Activated naive CD4-positive, alpha-beta T cell treated with anti-CD3 and anti-CD28 coated beads for 36 hours (primary cell): ENCODE measurements at regions of chr1 and their contacts with region 1.

Region 1: DNA sequence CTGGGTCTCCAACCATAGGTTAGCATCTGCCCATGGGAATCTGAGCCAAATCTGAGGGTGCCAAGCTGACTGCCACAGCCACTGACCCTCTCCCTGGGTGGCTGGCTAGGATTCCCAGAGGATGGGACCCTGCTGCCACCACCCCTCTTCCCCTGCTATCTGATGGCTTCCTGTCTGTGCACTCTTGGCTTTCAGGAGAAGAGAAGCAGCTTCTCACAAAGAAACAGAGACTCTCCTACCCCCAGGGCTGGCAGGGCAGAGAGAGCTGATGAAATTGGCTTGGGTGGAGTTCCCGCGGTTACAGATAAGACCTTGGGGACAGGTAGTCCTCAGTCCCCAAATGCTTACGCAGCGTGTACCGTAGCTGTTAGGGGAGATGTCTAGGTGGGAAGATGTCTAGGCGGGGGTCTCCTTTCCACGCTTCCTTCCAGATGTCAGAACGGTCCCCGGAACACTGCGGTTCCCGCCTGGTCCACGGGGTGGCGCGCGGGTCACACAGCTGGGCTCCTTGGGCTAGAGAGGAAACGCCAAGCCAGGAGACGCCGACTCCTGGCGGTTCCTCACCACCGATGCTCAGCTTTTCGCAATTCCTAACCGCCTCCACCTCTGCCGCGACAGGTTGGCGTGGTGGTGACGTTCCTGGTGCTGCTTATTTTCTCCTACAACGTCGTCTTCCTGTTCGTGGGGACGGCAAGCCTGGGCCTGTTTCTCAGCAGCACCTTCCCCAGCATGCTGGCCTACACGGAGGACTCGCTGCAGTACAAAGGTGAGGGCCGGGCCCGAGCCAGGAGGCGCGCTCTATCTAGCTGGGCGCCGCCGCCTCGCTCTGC is 40.1 kb downstream of the ELK4 start:
- DNase-seq: peak; percentile 96
- H3K4me3 Mint-ChIP-seq: peak overlapping the region; percentile 88
- H3K27ac Mint-ChIP-seq: peak overlapping the region; percentile 90
- H3K4me1 Mint-ChIP-seq: peaks cover 48% of the 10 kb centered on the region
- H3K27me3 Mint-ChIP-seq: no peaks in the 10 kb centered on the region

Region 2: DNA sequence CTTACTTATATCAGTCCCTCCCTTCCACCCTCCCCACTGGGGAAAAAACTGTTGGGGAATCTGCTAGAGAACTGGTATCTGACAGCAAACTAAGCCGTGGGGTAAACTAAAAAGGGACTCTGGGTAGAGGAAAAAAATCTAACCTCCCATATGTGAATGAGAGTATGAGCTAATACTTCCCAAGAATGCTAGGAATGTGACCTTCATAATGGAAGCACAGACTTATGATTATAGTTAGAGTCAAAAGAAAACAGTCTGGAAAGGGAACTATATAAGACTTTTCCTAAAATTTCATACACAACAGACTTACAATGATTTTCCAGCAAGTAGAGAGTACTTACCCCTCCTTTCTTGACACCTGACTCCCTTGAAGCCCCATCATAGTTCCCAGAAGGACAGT is 447.0 kb before region 1 on chr1:
- CTCF ChIA-PET with region 1: no interaction called
- intact Hi-C with region 1: no loop called
- DNase-seq: no peak
- H3K4me3 Mint-ChIP-seq: no peak overlapping the region
- H3K27ac Mint-ChIP-seq: no peak overlapping the region
- H3K4me1 Mint-ChIP-seq: peaks cover 7% of the 10 kb centered on the region
- H3K27me3 Mint-ChIP-seq: no peaks in the 10 kb centered on the region

Region 3: DNA sequence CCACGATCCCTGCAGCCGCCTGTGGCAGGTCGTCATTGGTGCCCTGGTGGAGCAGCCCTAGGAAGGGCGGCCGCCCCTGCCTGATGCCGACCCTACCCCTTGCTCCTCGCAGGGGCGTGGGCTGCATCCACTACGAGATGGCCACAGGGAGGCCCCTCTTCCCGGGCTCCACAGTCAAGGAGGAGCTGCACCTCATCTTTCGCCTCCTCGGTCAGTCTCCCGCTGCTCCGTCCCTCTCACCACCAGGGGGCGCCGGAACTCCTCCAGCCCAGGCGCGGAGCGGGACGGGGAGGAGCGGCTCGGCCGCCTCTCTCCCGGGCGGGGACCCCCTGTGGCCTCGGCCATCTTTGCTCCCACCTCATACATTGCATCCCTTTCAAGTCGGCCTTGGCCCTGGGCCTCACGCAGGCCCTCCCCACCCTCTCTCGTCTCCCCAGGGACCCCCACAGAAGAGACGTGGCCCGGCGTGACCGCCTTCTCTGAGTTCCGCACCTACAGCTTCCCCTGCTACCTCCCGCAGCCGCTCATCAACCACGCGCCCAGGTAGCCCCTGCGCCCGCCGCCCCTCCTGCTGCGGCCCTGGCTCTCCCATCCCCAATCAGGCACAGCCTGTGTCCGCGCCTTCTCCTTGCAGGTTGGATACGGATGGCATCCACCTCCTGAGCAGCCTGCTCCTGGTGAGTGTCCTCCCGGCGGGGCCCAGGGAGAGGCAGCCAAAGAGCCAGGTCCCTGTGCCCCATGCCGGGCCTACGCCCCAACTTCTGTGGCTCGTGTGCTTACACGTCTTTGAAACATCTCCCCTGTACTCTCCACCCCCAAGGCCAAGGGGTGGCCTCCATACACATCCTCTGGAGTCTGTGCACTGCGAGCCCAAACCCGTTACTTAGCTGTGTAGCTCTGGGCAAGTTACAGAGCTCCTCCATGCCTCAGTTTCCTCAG is 62.6 kb before region 1 on chr1:
- CTCF ChIA-PET with region 1: interaction called, 26 read pairs
- intact Hi-C with region 1: loop called (anchors 1 kb)
- DNase-seq: peak; percentile 87
- H3K4me3 Mint-ChIP-seq: peak overlapping the region; percentile 36
- H3K27ac Mint-ChIP-seq: no peak overlapping the region
- H3K4me1 Mint-ChIP-seq: no peaks in the 10 kb centered on the region
- H3K27me3 Mint-ChIP-seq: no peaks in the 10 kb centered on the region

Region 4: GRCh38 chr1:205543411-205544301 is 48.1 kb before region 1 on chr1:
- CTCF ChIA-PET with region 1: interaction called, 11 read pairs
- intact Hi-C with region 1: no loop called
- DNase-seq: peak; percentile 61
- H3K4me3 Mint-ChIP-seq: peak overlapping the region; percentile 36
- H3K27ac Mint-ChIP-seq: no peak overlapping the region
- H3K4me1 Mint-ChIP-seq: peaks cover 11% of the 10 kb centered on the region
- H3K27me3 Mint-ChIP-seq: peaks cover 23% of the 10 kb centered on the region

Region 5: DNA sequence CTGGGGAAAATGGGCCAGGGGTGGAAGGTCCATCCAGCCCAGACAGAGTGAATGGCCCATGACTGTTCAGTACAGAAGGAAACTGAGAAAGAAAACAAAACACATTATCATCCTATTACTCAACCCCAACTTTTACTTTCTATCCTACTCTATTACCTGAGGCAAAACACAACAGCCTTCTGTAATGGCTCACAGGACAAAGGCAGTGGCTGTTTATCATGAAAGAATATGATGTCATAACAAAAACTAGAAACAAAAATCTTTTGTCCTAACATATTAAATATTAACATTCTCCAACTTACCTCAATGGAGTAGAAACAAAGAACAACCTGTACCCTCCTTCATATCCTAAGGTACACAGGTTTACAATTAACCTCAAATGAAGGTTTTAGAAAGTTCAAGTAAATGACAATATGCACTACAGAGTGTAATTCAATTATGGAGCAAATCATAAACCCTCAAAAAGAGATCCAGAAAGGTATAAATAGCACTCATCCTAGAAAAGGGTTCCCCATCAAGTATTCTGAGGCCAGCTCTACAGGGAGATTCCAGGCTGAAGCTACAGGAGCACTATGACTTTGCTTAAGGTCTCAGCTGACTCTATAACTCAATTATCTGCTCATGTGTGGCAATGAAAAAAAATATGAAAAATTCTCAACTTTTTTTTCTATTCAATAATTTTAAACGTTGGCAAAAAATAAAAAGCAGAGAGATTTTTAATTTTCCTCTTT is 25.0 kb after region 1 on chr1:
- CTCF ChIA-PET with region 1: interaction called, 10 read pairs
- intact Hi-C with region 1: no loop called
- DNase-seq: no peak
- H3K4me3 Mint-ChIP-seq: no peak overlapping the region
- H3K27ac Mint-ChIP-seq: peak overlapping the region; percentile 74
- H3K4me1 Mint-ChIP-seq: peaks cover 40% of the 10 kb centered on the region
- H3K27me3 Mint-ChIP-seq: no peaks in the 10 kb centered on the region

Region 6: GRCh38 chr1:205637854-205638468 is 46.2 kb after region 1 on chr1:
- CTCF ChIA-PET with region 1: interaction called, 262 read pairs
- intact Hi-C with region 1: no loop called
- DNase-seq: no peak
- H3K4me3 Mint-ChIP-seq: no peak overlapping the region
- H3K27ac Mint-ChIP-seq: no peak overlapping the region
- H3K4me1 Mint-ChIP-seq: no peaks in the 10 kb centered on the region
- H3K27me3 Mint-ChIP-seq: no peaks in the 10 kb centered on the region

Region 7: GRCh38 chr1:205645519-205645918 is 53.8 kb after region 1 on chr1:
- CTCF ChIA-PET with region 1: interaction called, 26 read pairs
- intact Hi-C with region 1: no loop called
- DNase-seq: no peak
- H3K4me3 Mint-ChIP-seq: no peak overlapping the region
- H3K27ac Mint-ChIP-seq: no peak overlapping the region
- H3K4me1 Mint-ChIP-seq: no peaks in the 10 kb centered on the region
- H3K27me3 Mint-ChIP-seq: no peaks in the 10 kb centered on the region

Region 8: DNA sequence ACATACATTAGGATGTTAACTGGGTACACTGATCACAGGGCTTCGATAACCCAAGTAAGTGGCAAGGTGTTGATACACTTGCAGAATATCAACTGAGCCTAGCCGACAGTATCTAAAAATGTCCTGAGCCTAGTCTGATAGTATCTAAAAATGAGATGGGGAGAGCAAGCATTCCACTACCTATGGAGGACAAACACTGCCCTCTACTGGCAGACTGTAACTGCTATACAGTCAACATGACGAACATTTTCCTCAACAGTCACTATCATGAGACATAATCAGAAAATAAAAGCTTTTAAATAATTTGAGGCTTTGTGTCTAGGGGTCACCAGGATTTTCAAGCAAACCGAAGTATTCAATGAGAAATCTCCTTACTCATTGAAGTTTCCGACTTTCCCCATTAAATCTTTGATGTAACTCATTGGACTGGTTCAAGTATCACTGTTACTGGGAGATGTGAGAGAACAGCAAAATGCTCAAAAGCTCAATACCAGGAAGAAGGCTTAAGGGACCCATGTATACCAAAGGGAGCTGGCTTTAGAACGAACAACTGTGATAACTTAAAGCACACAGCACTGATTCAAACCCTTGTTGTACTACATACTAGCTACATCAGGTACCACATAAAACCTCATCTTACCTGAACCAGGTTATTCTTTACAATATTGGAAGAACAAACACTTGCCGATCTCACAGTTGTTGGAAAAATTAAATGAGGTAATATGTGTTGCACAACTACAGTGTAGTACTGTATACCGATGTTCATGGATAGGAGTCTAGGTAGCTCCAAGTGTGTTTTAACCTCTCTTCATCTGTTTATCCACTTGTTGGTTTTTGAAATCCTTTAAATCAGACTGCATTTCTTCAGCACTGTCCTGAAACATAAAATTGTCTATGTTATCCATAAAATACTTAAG is 119.6 kb after region 1 on chr1:
- CTCF ChIA-PET with region 1: interaction called, 18 read pairs
- intact Hi-C with region 1: loop called (anchors 1 kb)
- DNase-seq: peak; percentile 85
- H3K4me3 Mint-ChIP-seq: no peak overlapping the region
- H3K27ac Mint-ChIP-seq: peak overlapping the region; percentile 56
- H3K4me1 Mint-ChIP-seq: peaks cover 22% of the 10 kb centered on the region
- H3K27me3 Mint-ChIP-seq: no peaks in the 10 kb centered on the region